Endothelial cell of umbilical vein (primary cell): ENCODE measurements at regions of chr4 and their contacts with region 1.

Region 1: GRCh38 chr4:88514557-88515511 is 8.7 kb downstream of the PYURF start:
- DNase-seq: no peak
- H3K4me3 ChIP-seq: no peak overlapping the region
- H3K27ac ChIP-seq: no peak overlapping the region
- H3K4me1 ChIP-seq: peaks cover 10% of the 10 kb centered on the region
- H3K27me3 ChIP-seq: no peaks in the 10 kb centered on the region
- CTCF ChIP-seq: no peak
- POLR2A ChIP-seq: no peak

Region 2: GRCh38 chr4:88054901-88055300 is 459.9 kb before region 1 on chr4:
- CTCF ChIA-PET with region 1: interaction called, 13 read pairs
- POLR2A ChIA-PET with region 1: no interaction called
- dilution Hi-C with region 1: no loop called
- intact Hi-C with region 1: no loop called
- DNase-seq: peak; percentile 77
- H3K4me3 ChIP-seq: no peak overlapping the region
- H3K27ac ChIP-seq: no peak overlapping the region
- H3K4me1 ChIP-seq: peaks cover 4% of the 10 kb centered on the region
- H3K27me3 ChIP-seq: no peaks in the 10 kb centered on the region
- CTCF ChIP-seq: peak; percentile 46 to 72
- POLR2A ChIP-seq: no peak

Region 3: GRCh38 chr4:88225232-88226105 is 289.4 kb before region 1 on chr4:
- CTCF ChIA-PET with region 1: interaction called, 519 read pairs
- POLR2A ChIA-PET with region 1: no interaction called
- dilution Hi-C with region 1: no loop called
- intact Hi-C with region 1: no loop called
- DNase-seq: peak; percentile 91
- H3K4me3 ChIP-seq: peak overlapping the region in 1 of 3 experiments; percentile 6
- H3K27ac ChIP-seq: peak overlapping the region; percentile 95
- H3K4me1 ChIP-seq: peaks cover 19% of the 10 kb centered on the region
- H3K27me3 ChIP-seq: no peaks in the 10 kb centered on the region
- CTCF ChIP-seq: no peak
- POLR2A ChIP-seq: no peak

Region 4: DNA sequence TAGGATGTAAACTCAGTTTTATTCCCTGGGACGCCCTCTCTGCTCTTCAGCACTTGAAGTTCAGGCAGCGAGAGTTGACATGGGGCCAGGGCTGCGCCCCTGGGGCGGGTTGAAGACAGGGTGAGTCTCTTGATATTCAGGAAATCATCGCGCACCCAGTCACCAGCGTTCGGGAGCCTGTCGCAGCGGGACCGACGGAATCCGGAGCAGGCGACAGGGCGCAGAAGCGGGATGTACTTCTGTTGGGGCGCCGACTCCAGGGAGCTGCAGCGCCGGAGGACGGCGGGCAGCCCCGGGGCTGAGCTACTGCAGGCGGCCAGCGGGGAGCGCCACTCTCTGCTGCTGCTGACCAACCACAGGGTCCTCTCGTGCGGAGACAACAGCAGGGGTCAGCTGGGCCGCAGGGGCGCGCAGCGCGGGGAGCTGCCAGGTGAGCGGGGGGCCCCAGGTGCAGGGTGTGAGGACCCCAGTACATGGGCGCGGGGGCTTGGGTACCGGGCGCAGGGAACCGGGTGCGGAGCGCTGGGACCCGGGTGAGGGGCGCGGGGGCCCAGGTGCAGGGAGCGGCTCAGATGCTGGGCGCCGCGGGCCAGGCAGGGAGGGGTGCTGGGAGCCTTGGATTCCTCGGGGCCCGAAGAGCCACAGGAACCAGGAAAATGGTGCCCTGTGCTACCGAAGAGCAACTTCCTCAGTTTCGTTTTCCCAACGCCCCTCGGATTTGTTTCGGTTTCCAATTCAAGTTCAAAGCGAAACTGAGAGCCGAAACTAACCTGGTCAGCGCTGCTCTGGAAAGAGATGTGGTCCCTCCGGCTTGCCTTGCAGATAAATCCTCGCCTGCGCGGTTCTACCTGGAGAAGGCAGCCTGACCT is 135.9 kb before region 1 on chr4 and contains the start of gene HERC6:
- CTCF ChIA-PET with region 1: interaction called, 41 read pairs
- POLR2A ChIA-PET with region 1: no interaction called
- dilution Hi-C with region 1: no loop called
- intact Hi-C with region 1: loop called (anchors 1 kb)
- DNase-seq: peak; percentile 81
- H3K4me3 ChIP-seq: peak within 1 kb of the TSS; percentile 76 to 91 (median 89)
- H3K27ac ChIP-seq: peak within 1 kb of the TSS; percentile 61
- H3K4me1 ChIP-seq: peaks cover 3% of the 10 kb centered on the region
- H3K27me3 ChIP-seq: peaks cover 0 to 3% of the 10 kb centered on the region in 2 experiments
- CTCF ChIP-seq: peak; percentile 72 to 91
- POLR2A ChIP-seq: no peak
- total RNA-seq, gene HERC6: 4.1 and 5.0 TPM in 2 replicates